SK-N-SH (cell line): ENCODE measurements at regions of chr16 and their contacts with region 1.

Region 1: GRCh38 chr16:9647981-9648712 is 534.1 kb downstream of the GRIN2A start:
- DNase-seq: peak; percentile 33
- H3K4me3 ChIP-seq: no peak overlapping the region
- H3K27ac ChIP-seq: no peak overlapping the region
- H3K4me1 ChIP-seq: no peaks in the 10 kb centered on the region
- H3K27me3 ChIP-seq: no peaks in the 10 kb centered on the region
- CTCF ChIP-seq: peak; percentile 45
- EP300 ChIP-seq: no peak
- RAD21 ChIP-seq: peak; percentile 67

Region 2: DNA sequence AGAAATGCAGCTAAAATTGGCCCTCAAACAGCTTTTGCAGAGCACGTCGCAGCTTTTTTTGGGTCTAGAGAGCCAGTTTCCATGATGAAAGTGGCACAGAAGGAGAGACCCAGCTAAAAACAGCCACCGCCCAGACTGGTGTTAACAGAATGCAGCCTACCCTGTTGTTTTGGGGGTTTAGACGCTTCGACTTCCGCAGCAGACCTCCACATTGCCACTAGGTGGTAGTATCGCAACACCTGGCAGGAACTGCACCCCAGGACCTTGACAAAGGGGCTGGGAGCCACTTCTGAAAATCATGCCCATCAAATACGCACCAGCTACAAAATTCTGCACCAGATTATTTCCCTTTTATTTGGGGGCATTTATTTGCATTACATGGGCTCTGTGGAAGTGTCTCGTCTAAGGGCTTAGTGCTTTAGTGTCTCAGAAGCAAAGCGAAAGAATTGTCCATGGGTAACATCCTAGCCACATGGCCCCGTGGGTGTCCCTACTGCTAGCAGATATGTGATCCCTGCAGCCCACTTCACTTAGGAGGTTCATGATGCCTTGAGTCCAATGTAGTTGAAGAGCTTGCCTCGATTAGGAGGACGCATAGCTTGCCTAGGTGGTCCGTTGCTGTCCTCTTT is 389.6 kb before region 1 on chr16:
- CTCF ChIA-PET with region 1: interaction called, 14 read pairs
- POLR2A ChIA-PET with region 1: no interaction called
- DNase-seq: peak; percentile 63
- H3K4me3 ChIP-seq: peak overlapping the region in 1 of 2 experiments; percentile 47; a peak in 1 of 4 replicates
- H3K27ac ChIP-seq: no peak overlapping the region
- H3K4me1 ChIP-seq: peaks cover 0 to 13% of the 10 kb centered on the region in 2 experiments; a peak in 1 of 4 replicates
- H3K27me3 ChIP-seq: no peaks in the 10 kb centered on the region
- CTCF ChIP-seq: peak; percentile 44
- EP300 ChIP-seq: no peak
- RAD21 ChIP-seq: peak; percentile 78

Region 3: DNA sequence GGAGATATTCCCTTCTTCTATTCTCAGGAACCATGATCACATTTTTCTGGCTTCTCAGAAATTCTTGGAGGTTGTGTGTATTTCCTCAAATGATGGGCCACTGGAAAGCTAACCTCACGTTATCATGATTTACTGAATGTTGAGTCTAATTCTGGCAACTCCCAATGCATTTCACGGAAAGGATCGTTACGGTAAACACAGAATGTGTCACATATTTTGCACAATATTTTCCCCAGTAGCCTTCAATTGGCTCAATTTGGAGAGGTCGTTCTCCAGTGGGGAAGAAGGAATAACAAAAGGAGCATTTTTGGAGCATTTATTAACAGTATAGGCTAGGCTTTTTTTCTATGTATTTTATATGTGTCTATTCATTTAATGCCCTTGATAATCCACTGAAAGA is 106.4 kb before region 1 on chr16:
- CTCF ChIA-PET with region 1: no interaction called
- POLR2A ChIA-PET with region 1: no interaction called
- DNase-seq: no peak
- H3K4me3 ChIP-seq: no peak overlapping the region
- H3K27ac ChIP-seq: no peak overlapping the region
- H3K4me1 ChIP-seq: no peaks in the 10 kb centered on the region
- H3K27me3 ChIP-seq: no peaks in the 10 kb centered on the region
- CTCF ChIP-seq: no peak
- EP300 ChIP-seq: no peak
- RAD21 ChIP-seq: no peak

Region 4: GRCh38 chr16:9665851-9666271 is 17.7 kb after region 1 on chr16:
- CTCF ChIA-PET with region 1: interaction called, 12 read pairs
- POLR2A ChIA-PET with region 1: no interaction called
- DNase-seq: no peak
- H3K4me3 ChIP-seq: no peak overlapping the region
- H3K27ac ChIP-seq: no peak overlapping the region
- H3K4me1 ChIP-seq: no peaks in the 10 kb centered on the region
- H3K27me3 ChIP-seq: no peaks in the 10 kb centered on the region
- CTCF ChIP-seq: no peak
- EP300 ChIP-seq: no peak
- RAD21 ChIP-seq: no peak

Region 5: DNA sequence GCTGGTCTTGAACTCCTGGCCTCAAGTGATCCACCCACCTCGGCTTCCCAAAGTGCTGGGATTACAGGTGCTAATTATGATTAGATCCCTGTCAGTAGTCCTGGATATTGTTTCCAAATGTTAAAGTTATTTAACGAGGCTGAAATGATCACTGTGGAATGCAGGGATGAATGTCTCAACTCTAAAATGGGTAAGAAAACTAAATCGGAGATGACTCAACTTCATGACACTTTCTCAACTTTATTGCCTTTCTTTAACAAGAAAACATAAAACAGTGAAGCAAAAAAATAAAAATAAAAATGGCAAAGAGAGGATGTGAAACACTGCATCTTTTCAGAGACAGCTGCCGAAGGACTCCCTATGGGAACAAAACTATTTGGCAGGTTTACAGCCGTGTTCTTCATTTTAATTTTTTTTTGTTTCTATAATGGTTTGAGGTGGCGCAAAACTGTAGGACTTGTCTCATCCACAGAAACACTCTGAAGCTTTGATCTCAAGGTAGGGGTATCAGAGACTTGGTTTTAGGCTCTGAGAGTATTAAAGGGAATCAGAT is 152.1 kb after region 1 on chr16:
- CTCF ChIA-PET with region 1: no interaction called
- POLR2A ChIA-PET with region 1: no interaction called
- DNase-seq: no peak
- H3K4me3 ChIP-seq: no peak overlapping the region
- H3K27ac ChIP-seq: no peak overlapping the region
- H3K4me1 ChIP-seq: no peaks in the 10 kb centered on the region
- H3K27me3 ChIP-seq: no peaks in the 10 kb centered on the region
- CTCF ChIP-seq: no peak
- EP300 ChIP-seq: no peak
- RAD21 ChIP-seq: no peak

Region 6: DNA sequence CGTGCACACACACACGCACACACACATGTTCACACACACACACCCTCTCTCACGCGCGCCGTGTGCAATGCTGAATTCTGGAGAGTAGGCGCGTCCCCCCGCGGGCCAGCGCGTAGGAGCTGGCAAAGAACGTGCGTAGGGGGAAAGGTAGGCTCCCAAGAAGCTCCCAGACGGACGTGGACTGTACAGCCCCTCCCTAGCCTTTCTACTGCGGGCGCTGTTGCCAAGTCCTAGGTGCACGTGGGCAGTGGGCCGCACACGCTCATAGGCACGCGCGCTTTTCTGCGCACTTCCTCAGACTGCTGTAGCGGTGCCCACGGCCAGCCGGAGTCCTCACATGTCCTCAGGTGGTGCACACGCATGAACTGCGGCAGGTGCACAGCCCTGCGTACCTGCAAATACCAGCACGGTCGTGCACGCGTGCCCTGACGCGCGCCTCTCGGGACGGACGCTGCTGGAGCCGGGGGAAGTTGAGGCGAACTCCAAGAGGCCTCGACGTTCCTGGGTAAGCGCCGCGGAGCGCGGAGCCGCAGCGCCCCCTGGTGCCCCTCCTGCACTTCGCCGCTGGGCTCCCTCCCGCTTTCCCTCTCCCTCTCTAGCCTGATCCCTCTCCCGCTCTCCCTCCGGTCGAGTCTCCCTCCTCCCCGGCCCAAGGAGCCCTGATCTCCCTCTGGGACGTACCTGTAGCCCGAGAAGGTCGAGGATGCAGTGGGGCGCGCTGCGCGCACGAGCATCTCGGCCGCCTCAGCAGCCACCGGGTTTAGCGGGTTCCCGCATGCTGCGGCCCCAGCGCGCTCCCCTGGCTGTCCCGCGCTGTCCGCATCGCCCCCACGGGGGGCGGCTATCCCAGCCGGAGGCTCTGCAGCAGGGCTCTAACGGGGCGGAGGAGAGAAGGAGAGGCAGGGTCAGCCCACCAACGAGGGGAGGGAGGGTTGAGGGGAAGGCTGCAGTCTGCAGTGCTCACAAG is 533.3 kb after region 1 on chr16:
- CTCF ChIA-PET with region 1: interaction called, 32 read pairs
- POLR2A ChIA-PET with region 1: no interaction called
- DNase-seq: peak; percentile 91
- H3K4me3 ChIP-seq: no peak overlapping the region; a peak in 2 of 4 replicates
- H3K27ac ChIP-seq: no peak overlapping the region
- H3K4me1 ChIP-seq: peaks cover 0 to 5% of the 10 kb centered on the region in 2 experiments; a peak in 1 of 4 replicates
- H3K27me3 ChIP-seq: no peaks in the 10 kb centered on the region
- CTCF ChIP-seq: peak; percentile 46
- EP300 ChIP-seq: no peak
- RAD21 ChIP-seq: peak; percentile 86